Activated T-helper 2 cell treated with anti-CD3 and anti-CD28 coated beads, Interferon-gamma antibody, Interleukin-2, Interleukin-4, amounts not matched to agents 10 μg/mL and 5 μg/mL and 100 μg/mL, durations not matched to agents 14 hours and 24 hours and 36 hours (primary cell): ENCODE measurements at regions of chr17 and their contacts with region 1.

Region 1: GRCh38 chr17:45197555-45198334 is 23.9 kb upstream of the FMNL1 start:
- DNase-seq: peak; percentile 76
- H3K4me3 Mint-ChIP-seq: no peak overlapping the region
- H3K27ac Mint-ChIP-seq: no peak overlapping the region
- H3K4me1 Mint-ChIP-seq: peaks cover 4% of the 10 kb centered on the region
- H3K27me3 Mint-ChIP-seq: no peaks in the 10 kb centered on the region

Region 2: DNA sequence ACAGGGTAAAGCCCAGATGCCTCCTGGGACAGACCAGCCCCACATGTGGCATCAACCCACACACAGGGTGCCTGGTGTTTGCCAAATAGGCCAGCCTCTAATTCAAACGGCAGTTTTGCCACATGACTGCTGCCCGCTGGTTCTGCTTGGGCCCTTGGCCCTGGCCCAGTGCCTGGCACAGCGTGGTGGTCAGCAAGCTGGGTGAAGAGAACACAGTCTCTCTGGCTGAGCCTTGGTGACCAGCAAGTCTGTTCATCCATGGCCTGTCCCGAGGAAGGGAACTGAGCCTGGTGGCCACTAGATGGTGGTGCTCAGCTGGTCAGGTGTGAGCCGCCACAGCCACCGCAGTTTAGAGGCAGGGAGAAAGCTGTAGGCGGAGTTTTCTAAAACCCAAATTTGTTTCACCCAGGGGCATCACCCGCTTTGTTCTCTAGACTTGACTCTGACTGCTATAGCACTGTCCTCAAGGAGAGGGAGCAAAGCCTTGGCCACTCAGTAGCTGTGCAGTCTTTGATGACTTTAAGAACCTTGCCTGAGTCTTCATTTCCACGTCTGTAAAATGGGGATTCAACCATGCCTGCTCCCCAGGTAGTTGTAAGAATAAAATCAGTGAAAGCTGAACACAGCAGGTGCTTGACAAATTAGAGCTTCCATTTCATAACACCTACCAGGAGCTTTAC is 277.7 kb before region 1 on chr17:
- intact Hi-C with region 1: loop called (anchors 10 kb)
- DNase-seq: peak; percentile 50
- H3K4me3 Mint-ChIP-seq: no peak overlapping the region
- H3K27ac Mint-ChIP-seq: no peak overlapping the region
- H3K4me1 Mint-ChIP-seq: no peaks in the 10 kb centered on the region
- H3K27me3 Mint-ChIP-seq: peaks cover 26% of the 10 kb centered on the region